GM12878 (cell line): ENCODE measurements at regions of chr9 and their contacts with region 1.

Region 1: DNA sequence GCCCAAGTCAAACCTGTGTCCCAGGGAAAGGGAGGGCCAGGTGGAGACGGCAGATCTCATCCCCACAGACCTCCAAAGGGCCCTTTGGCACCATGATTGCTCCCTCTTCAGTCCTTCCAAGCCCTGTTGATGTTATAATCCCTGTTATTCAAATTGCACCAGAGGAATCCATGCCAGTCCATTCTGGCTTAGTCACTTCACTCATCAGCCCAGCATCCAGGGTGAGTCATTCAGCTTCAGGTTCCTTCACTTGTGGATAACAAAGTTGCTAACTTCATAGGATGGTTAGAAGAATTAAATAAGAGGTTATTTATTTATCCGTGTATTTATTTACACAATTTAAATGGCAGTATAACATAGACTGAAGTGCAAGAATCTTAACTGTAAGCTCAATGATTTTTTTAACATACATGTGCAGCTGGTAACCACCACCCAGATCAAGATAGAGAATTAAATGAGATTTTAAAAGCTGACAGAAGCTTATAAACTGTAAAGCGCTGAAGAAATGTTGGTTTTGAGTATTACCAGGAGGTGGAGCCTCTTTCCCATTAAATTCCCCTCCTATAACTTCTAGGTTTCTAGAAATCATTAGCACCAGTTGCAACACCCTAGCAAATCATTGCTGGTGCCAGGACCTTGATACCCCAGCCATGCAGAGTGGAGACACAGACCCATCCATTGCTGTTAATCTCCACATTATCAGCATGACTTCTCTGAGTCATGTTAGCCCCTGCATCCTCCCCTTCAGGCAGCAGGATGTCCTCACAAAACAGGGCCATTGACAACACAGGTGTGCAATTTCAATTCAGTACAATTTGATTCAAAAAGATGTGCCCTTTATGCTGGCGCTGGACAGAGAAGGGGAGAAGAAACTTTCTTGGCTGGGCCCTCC is 77.4 kb downstream of the SEC61B start:
- DNase-seq: no peak
- ATAC-seq: peak; percentile 55
- H3K4me3 ChIP-seq: no peak overlapping the region
- H3K27ac ChIP-seq: no peak overlapping the region
- H3K4me1 ChIP-seq: no peaks in the 10 kb centered on the region
- H3K27me3 ChIP-seq: no peaks in the 10 kb centered on the region
- CTCF ChIP-seq: peak in 2 of 3 experiments; percentile 15 to 39; a peak in 2 of 6 replicates
- EP300 ChIP-seq: no peak
- POLR2A ChIP-seq: no peak
- RAD21 ChIP-seq: peak; percentile 61

Region 2: DNA sequence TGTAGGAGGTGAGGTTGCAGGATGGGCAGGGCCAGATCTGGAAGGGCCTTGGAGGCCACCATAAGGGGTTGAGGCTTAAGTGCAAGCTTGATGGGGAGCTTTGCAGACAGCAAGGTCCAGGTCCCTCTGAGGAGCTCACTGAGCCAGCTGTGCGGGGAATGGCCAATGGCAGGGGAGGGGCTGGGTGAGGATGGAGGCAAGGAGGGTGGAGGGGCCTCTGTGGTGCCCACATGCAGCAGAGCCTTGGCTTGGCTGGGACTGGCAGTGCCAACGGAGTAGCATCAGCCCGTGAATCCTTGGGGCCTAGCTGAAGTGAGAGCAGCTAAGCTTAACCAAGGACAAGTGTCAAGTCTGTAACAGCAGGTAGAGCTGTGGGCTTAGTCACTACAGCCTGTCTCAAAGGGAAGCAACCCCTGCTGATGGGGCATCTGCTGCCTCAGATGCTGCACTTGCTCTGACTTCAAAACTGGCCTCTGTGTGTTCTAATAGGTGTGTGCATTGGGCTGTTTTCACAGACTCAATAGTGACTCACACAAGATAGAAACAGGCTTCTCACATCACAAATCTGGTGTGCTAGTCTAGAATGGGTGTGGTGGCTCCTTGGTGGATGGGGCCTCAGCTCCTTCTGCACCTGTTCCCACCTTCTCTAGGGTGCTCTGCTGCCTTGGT is 475.7 kb before region 1 on chr9:
- CTCF ChIA-PET with region 1: no interaction called
- POLR2A ChIA-PET with region 1: no interaction called
- RAD21 ChIA-PET with region 1: no interaction called
- SMC1A ChIA-PET with region 1: no interaction called
- in situ Hi-C with region 1: no loop called
- intact Hi-C with region 1: no loop called
- DNase-seq: no peak
- ATAC-seq: no peak
- H3K4me3 ChIP-seq: no peak overlapping the region
- H3K27ac ChIP-seq: no peak overlapping the region
- H3K4me1 ChIP-seq: no peaks in the 10 kb centered on the region
- H3K27me3 ChIP-seq: no peaks in the 10 kb centered on the region
- CTCF ChIP-seq: no peak
- EP300 ChIP-seq: no peak
- POLR2A ChIP-seq: no peak
- RAD21 ChIP-seq: no peak

Region 3: DNA sequence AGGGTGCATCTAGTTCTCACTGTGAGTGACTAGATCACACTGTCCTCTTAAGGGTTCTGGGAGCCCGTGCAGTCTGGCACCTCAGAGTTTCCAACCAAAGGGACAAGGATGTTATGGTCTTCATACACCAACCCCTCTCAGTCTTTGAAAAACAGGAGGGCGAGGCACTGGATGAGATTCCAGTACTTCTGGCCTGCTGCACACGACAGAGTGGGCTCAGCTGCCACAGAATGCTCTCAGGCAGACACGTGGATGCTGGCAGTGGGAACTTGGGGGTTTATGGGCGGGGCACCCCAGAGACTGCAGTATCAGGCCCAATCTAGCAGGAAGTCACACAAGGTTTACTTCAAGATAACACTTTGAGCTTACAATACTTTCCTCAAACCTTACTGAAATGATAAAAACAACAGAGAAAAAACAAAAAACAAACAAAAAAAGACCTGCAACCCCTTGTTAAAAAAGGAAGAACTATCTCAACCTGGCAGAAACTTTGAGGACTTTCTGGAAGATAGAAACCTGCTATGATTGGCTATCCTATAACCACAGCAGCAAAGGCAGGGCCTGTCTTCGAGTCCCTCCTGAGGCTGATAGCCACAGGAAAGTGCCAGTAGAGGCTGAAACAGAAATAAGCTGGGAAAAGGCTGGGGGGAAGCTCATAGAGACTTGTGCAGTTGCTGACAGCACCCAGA is 222.8 kb before region 1 on chr9:
- CTCF ChIA-PET with region 1: no interaction called
- POLR2A ChIA-PET with region 1: no interaction called
- RAD21 ChIA-PET with region 1: no interaction called
- SMC1A ChIA-PET with region 1: no interaction called
- in situ Hi-C with region 1: no loop called
- intact Hi-C with region 1: no loop called
- DNase-seq: no peak
- ATAC-seq: peak; percentile 44; the same call in 2 of the 3 replicates
- H3K4me3 ChIP-seq: no peak overlapping the region
- H3K27ac ChIP-seq: no peak overlapping the region
- H3K4me1 ChIP-seq: peaks cover 6% of the 10 kb centered on the region; the same call in 1 of the 2 replicates
- H3K27me3 ChIP-seq: no peaks in the 10 kb centered on the region
- CTCF ChIP-seq: no peak
- EP300 ChIP-seq: no peak
- POLR2A ChIP-seq: no peak
- RAD21 ChIP-seq: no peak

Region 4: GRCh38 chr9:99257723-99258389 is 41.6 kb before region 1 on chr9:
- CTCF ChIA-PET with region 1: no interaction called
- POLR2A ChIA-PET with region 1: no interaction called
- RAD21 ChIA-PET with region 1: no interaction called
- SMC1A ChIA-PET with region 1: no interaction called
- in situ Hi-C with region 1: no loop called
- intact Hi-C with region 1: no loop called
- DNase-seq: no peak
- ATAC-seq: no peak
- H3K4me3 ChIP-seq: no peak overlapping the region
- H3K27ac ChIP-seq: no peak overlapping the region
- H3K4me1 ChIP-seq: peaks cover 32% of the 10 kb centered on the region
- H3K27me3 ChIP-seq: no peaks in the 10 kb centered on the region
- CTCF ChIP-seq: no peak
- EP300 ChIP-seq: no peak
- POLR2A ChIP-seq: no peak
- RAD21 ChIP-seq: no peak

Region 5: GRCh38 chr9:99353408-99353807 is 54.0 kb after region 1 on chr9:
- CTCF ChIA-PET with region 1: no interaction called
- POLR2A ChIA-PET with region 1: no interaction called
- RAD21 ChIA-PET with region 1: no interaction called
- SMC1A ChIA-PET with region 1: no interaction called
- in situ Hi-C with region 1: no loop called
- intact Hi-C with region 1: no loop called
- DNase-seq: no peak
- ATAC-seq: no peak
- H3K4me3 ChIP-seq: no peak overlapping the region
- H3K27ac ChIP-seq: no peak overlapping the region
- H3K4me1 ChIP-seq: no peaks in the 10 kb centered on the region
- H3K27me3 ChIP-seq: no peaks in the 10 kb centered on the region
- CTCF ChIP-seq: no peak
- EP300 ChIP-seq: no peak
- POLR2A ChIP-seq: no peak
- RAD21 ChIP-seq: no peak

Region 6: DNA sequence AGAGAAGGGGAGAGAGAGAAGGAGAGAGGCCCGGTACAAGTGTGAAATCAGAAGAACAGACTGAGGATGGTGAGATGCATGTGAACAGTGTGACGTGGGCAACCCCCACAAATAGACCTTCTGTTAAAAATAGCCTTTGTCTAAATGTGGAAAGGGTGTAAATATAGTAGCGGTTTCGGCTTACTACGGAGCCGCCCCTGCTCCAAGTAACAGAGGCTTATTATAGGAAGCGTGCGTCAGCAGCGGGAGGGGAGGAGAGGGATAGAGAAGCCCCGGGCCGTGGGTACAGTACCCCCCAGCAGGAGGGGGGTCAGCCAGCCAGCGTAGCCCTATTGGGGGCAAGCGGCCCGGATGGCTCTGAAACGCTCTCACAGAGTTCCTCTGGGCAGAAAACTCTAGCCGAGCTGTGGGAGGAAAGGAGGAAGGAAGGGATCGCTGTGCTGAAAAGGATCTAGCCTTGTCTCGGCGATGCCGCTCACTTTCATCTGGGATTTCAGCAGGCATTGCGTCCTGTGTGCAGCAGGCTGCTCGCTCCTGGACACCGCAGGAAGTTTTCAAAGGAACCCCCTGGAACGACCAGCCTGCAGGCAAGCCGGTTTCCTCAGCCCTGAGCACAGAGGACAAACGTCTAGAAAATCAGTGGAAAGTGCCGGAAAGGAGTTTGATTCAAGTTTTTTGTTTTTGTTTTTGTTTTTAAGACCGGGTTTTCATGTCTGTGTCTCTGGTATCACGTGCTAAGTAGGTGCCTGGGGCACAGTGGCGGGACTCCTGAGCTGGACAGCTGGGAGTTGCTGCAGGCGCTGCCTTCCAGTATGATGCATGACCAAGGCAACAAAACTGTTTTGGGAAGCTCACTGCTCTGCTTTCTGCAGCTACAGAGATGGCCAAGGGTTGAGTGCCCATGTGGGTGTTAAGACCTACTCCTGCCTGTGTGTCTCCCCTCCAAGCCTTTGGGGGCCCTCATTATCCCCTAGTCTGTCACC is 69.2 kb after region 1 on chr9:
- CTCF ChIA-PET with region 1: no interaction called
- POLR2A ChIA-PET with region 1: no interaction called
- RAD21 ChIA-PET with region 1: no interaction called
- SMC1A ChIA-PET with region 1: no interaction called
- in situ Hi-C with region 1: no loop called
- intact Hi-C with region 1: loop called (anchors 10 kb)
- DNase-seq: peak; percentile 24
- ATAC-seq: peak; percentile 84
- H3K4me3 ChIP-seq: peak overlapping the region; percentile 51
- H3K27ac ChIP-seq: no peak overlapping the region
- H3K4me1 ChIP-seq: peaks cover 20% of the 10 kb centered on the region
- H3K27me3 ChIP-seq: no peaks in the 10 kb centered on the region; a peak in 1 of 4 replicates
- CTCF ChIP-seq: no peak
- EP300 ChIP-seq: peak; percentile 81 to 89; a peak in 3 of 4 replicates
- POLR2A ChIP-seq: no peak
- RAD21 ChIP-seq: no peak

Region 7: GRCh38 chr9:100011062-100011681 is 711.7 kb after region 1 on chr9:
- CTCF ChIA-PET with region 1: interaction called, 5 read pairs
- POLR2A ChIA-PET with region 1: no interaction called
- RAD21 ChIA-PET with region 1: no interaction called
- SMC1A ChIA-PET with region 1: interaction called, 3 read pairs
- in situ Hi-C with region 1: no loop called
- intact Hi-C with region 1: loop called (anchors 1 kb)
- DNase-seq: peak; percentile 38
- ATAC-seq: peak; percentile 73
- H3K4me3 ChIP-seq: no peak overlapping the region
- H3K27ac ChIP-seq: no peak overlapping the region
- H3K4me1 ChIP-seq: no peaks in the 10 kb centered on the region
- H3K27me3 ChIP-seq: no peaks in the 10 kb centered on the region
- CTCF ChIP-seq: peak; percentile 48 to 58 (median 56)
- EP300 ChIP-seq: no peak
- POLR2A ChIP-seq: no peak
- RAD21 ChIP-seq: peak; percentile 76